Calu3 (cell line): ENCODE measurements at regions of chr6 and their contacts with region 1.

Region 1: DNA sequence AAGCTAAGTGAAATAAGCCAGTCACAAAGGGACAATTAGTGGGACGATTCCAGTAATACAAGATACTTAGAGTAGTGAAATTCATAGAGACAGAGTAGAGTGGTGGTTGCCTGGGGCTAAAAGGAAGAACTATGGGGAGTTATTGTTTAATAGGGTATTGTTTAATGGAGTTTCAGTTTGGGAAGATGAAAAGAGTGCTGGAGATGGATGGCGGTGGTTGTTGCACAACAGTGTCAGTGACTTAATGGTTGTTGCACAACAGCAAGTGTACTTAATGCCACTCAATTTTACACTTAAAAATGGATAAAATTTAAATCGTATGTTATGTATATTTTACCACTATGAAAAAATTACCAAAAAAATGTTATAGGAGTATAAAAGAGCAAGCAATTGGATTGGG is 209.7 kb upstream of the TENT5A start:
- DNase-seq: no peak
- H3K4me3 Mint-ChIP-seq: no peak overlapping the region
- H3K27ac Mint-ChIP-seq: no peak overlapping the region
- H3K4me1 Mint-ChIP-seq: no peaks in the 10 kb centered on the region
- H3K27me3 Mint-ChIP-seq: no peaks in the 10 kb centered on the region
- CTCF ChIP-seq: no peak

Region 2: DNA sequence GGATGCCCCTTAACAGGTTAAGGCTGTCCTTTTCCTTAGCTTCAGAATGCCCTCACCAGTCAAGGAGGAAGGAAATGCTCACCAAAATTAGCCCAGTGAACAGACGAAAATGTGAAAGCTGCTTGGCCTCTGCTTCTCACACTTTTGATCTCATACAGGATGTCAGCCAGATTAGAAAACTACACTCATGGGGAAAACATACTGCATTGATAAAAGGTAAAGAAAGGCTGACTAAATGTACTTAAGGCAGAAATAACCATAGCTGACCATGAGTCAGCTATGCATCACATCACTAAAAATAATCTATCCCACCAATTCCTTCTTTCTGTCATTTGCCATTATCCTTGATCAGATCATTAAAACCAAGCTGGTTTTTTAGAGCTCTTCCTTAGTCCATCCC is 11.3 kb before region 1 on chr6:
- CTCF ChIA-PET with region 1: interaction called, 10 read pairs
- intact Hi-C with region 1: no loop called
- DNase-seq: no peak
- H3K4me3 Mint-ChIP-seq: no peak overlapping the region
- H3K27ac Mint-ChIP-seq: no peak overlapping the region
- H3K4me1 Mint-ChIP-seq: peaks cover 12% of the 10 kb centered on the region
- H3K27me3 Mint-ChIP-seq: no peaks in the 10 kb centered on the region
- CTCF ChIP-seq: no peak